CD4-positive, alpha-beta T cell (primary cell): ENCODE measurements at regions of chr1 and their contacts with region 1.

Region 1: DNA sequence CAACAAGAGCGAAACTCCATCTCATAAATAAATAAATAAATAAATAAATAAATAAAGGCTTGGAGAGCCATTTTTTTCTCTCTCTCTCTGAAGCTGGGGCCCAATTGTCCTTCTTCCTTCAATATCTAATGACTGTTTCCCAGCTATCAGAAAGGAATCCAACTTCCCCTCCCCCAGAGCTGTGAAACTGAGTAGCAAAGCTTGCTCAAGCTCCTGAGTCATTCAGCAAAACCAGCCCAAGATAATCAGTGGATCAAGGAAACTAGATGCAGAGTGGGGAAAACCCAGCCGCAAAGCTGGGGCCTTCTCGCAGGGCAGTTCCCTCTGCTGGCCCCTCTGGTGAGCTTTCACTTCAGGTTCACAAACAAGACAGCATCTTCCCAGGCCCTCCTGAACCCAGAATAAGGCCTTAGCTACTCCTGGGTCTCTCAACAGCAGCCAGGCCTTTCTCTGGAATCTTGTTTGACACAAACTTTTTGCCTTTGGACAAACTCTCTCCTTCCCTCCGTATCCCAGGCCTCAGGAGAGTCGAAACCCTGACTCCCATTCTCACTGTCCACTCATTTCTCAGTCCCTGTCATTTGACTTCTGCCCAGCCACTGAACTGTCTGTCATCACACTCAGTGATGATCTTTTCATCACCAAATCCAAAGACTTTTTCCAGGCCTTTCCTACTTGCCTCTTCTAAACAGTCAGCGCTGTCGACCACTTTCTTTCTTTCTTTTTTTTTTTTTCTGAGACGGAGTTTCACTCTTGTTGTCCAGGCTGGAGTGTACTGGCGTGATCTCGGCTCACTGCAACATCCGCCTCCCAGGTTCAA is 18.0 kb upstream of the PTP4A2 start:
- DNase-seq: peak; percentile 39 to 94 (median 63)
- ATAC-seq: peak; percentile 90
- H3K4me3 ChIP-seq: no peak overlapping the region
- H3K4me3 Mint-ChIP-seq: peak overlapping the region; percentile 49
- H3K27ac ChIP-seq: peak overlapping the region; percentile 30 to 82
- H3K27ac Mint-ChIP-seq: peak overlapping the region; percentile 80
- H3K4me1 ChIP-seq: peaks cover 73% of the 10 kb centered on the region
- H3K4me1 Mint-ChIP-seq: peaks cover 71% of the 10 kb centered on the region
- H3K27me3 ChIP-seq: no peaks in the 10 kb centered on the region
- H3K27me3 Mint-ChIP-seq: no peaks in the 10 kb centered on the region
- CTCF ChIP-seq: no peak

Region 2: DNA sequence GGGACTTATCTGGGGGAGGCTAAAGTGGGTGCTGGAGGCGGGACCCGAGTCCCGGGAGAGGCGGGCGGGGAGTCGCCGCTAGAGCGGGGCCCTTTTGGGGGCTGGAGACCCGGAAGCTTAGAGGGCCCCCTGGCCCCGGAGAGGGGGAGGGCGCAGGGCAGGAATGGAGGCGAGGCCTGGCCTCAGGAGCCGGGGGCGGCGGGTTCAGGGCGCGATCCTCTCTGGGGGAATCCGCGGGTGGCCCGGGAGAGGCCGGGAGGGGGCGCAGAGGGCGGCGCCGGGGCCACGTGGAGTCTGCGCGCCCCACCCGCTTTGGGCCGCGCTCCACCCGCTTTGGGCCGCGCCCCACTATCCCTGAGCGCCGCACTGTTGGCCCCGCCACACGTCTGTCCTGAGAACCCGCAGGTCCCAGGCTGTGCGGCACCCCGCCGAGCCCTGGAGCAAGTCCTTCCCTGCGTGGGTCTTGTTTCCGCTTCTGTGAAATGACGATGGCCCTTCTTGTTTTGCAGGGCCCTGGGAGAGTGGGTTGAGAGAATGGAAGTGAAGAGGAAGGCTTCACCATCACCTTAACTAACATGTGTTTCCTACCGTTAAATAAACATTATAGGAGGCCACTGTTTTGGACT is 800.8 kb before region 1 on chr1:
- CTCF ChIA-PET with region 1: no interaction called
- POLR2A ChIA-PET with region 1: no interaction called
- intact Hi-C with region 1: no loop called
- DNase-seq: peak; percentile 14 to 78 (median 32)
- ATAC-seq: peak; percentile 81
- H3K4me3 ChIP-seq: peak overlapping the region; percentile 66
- H3K4me3 Mint-ChIP-seq: peak overlapping the region; percentile 89
- H3K27ac ChIP-seq: no peak overlapping the region
- H3K27ac Mint-ChIP-seq: peak overlapping the region; percentile 40
- H3K4me1 ChIP-seq: peaks cover 14% of the 10 kb centered on the region
- H3K4me1 Mint-ChIP-seq: peaks cover 12% of the 10 kb centered on the region
- H3K27me3 ChIP-seq: no peaks in the 10 kb centered on the region
- H3K27me3 Mint-ChIP-seq: no peaks in the 10 kb centered on the region
- CTCF ChIP-seq: peak; percentile 35

Region 3: DNA sequence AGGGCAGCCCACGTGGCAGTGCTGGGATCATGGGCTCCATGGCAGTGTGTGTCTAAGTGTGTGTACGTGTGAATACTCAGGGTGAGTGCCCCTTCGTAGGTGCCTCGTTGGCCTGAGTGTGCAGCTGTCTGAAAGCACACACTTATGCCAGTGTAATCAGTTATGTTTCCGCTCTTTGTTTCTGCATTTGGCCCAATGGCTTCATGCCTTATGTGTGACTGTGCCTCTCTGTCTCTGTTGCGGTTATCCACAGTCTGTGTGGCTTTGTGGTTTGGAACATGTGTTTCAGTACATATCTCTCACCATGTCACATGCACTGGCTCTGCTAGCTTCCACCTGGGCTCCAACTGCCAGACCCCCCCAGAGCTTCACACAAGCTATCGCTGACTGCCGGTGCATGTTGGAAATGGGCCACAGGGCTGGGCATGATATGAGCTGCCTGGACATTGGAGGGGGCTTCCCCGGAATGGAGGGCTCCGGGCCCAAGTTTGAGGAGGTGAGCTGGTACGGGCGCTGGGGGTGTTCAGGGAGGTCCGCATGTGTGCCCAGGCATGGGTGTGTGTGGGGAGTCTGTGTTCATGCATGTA is 450.1 kb before region 1 on chr1:
- CTCF ChIA-PET with region 1: no interaction called
- POLR2A ChIA-PET with region 1: no interaction called
- intact Hi-C with region 1: no loop called
- DNase-seq: peak in 5 of 14 experiments; percentile 2 to 52 (median 23)
- ATAC-seq: peak; percentile 70
- H3K4me3 ChIP-seq: no peak overlapping the region
- H3K4me3 Mint-ChIP-seq: no peak overlapping the region
- H3K27ac ChIP-seq: no peak overlapping the region
- H3K27ac Mint-ChIP-seq: no peak overlapping the region
- H3K4me1 ChIP-seq: peaks cover 12% of the 10 kb centered on the region
- H3K4me1 Mint-ChIP-seq: peaks cover 46% of the 10 kb centered on the region
- H3K27me3 ChIP-seq: peaks cover 4 to 5% of the 10 kb centered on the region in 2 experiments
- H3K27me3 Mint-ChIP-seq: peaks cover 9% of the 10 kb centered on the region
- CTCF ChIP-seq: no peak

Region 4: GRCh38 chr1:31564134-31564989 is 391.8 kb before region 1 on chr1:
- CTCF ChIA-PET with region 1: no interaction called
- POLR2A ChIA-PET with region 1: no interaction called
- intact Hi-C with region 1: loop called in 1 of 2 experiments (anchors 10 kb)
- DNase-seq: peak in 12 of 14 experiments; percentile 17 to 68 (median 40)
- ATAC-seq: peak; percentile 63
- H3K4me3 ChIP-seq: no peak overlapping the region
- H3K4me3 Mint-ChIP-seq: no peak overlapping the region
- H3K27ac ChIP-seq: no peak overlapping the region
- H3K27ac Mint-ChIP-seq: no peak overlapping the region
- H3K4me1 ChIP-seq: no peaks in the 10 kb centered on the region
- H3K4me1 Mint-ChIP-seq: no peaks in the 10 kb centered on the region
- H3K27me3 ChIP-seq: peaks cover 12 to 20% of the 10 kb centered on the region in 2 experiments
- H3K27me3 Mint-ChIP-seq: peaks cover 13% of the 10 kb centered on the region
- CTCF ChIP-seq: peak; percentile 67

Region 5: DNA sequence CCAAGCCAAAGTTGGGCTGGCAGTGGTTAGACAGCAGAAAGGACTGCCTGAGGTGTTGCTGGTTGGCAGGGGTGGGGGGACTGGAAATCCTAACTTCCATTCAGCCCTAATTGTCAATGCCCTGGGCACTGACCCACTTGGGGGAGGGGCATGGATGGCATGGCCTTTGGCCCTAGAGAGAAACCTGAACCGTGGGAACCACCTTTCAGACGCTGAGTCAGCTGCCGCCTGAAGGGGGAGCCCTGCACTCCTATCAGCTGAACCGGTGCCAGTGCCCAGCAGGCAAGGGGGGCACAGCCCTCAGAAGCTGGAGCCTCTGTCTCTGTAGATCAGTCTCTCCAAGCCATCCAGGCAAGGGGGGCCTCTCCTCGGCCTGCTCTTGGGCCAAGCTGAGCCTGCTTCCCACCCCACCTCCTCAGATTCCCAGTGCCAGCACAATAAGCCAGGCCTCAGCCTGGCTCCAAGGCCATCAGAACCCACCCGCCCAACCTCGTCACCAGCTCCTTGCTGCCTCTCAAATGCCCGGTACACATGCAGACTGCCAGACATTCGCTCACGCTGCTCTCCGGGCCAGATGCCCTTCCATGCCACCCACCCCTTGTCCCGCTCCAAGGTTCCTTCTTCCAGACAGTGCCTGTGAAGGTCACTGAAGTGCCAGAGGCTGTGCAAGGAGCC is 368.3 kb before region 1 on chr1:
- CTCF ChIA-PET with region 1: no interaction called
- POLR2A ChIA-PET with region 1: no interaction called
- intact Hi-C with region 1: no loop called
- DNase-seq: peak in 11 of 14 experiments; percentile 13 to 64 (median 19)
- ATAC-seq: peak; percentile 58
- H3K4me3 ChIP-seq: no peak overlapping the region
- H3K4me3 Mint-ChIP-seq: no peak overlapping the region
- H3K27ac ChIP-seq: no peak overlapping the region
- H3K27ac Mint-ChIP-seq: no peak overlapping the region
- H3K4me1 ChIP-seq: no peaks in the 10 kb centered on the region
- H3K4me1 Mint-ChIP-seq: no peaks in the 10 kb centered on the region
- H3K27me3 ChIP-seq: peaks cover 2 to 6% of the 10 kb centered on the region in 2 experiments
- H3K27me3 Mint-ChIP-seq: peaks cover 41% of the 10 kb centered on the region
- CTCF ChIP-seq: peak; percentile 35

Region 6: DNA sequence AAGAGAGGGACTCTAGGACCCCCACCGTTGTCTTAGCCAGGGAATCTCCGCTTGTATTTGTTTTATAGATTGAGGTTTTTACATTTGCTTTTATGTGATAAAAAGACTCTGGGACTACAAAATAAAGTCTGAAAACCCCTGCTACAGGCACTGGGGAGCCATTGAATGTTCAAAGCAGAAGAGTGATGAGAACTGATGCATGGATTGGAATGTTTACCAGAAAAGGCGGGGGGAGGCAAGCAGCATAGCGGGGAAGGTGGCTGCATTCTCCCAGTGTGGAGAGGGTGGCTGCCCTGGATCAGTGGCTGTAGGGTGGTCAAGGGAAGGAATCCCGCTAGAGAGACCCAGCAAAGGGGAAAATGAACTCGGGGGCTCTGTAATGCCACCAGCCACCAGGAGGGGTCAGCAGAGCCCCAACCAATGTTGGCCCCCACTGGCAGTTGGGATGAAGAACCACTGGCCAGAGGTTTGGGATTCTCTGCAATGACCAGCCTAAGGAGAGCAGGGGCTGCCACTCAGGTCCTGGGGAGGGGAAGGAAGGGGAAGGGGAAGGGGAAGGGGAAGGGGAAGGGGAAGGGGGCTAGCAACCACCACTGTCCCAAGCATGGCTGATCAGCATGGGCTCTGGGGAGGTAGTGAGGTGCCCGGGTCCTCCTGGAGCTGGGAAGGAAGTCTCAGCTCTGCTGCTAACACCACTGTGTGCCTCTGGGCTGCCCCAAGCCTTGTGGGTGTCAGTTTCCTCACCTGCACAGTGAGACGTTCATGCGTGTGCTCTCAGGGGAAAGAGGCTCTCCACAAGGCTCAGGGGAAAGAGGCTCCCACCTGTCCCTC is 292.3 kb before region 1 on chr1:
- CTCF ChIA-PET with region 1: no interaction called
- POLR2A ChIA-PET with region 1: no interaction called
- intact Hi-C with region 1: loop called in 1 of 2 experiments (anchors 5 kb)
- DNase-seq: peak in 13 of 14 experiments; percentile 23 to 72 (median 54)
- ATAC-seq: peak; percentile 54
- H3K4me3 ChIP-seq: no peak overlapping the region
- H3K4me3 Mint-ChIP-seq: no peak overlapping the region
- H3K27ac ChIP-seq: no peak overlapping the region
- H3K27ac Mint-ChIP-seq: no peak overlapping the region
- H3K4me1 ChIP-seq: no peaks in the 10 kb centered on the region
- H3K4me1 Mint-ChIP-seq: no peaks in the 10 kb centered on the region
- H3K27me3 ChIP-seq: no peaks in the 10 kb centered on the region
- H3K27me3 Mint-ChIP-seq: no peaks in the 10 kb centered on the region
- CTCF ChIP-seq: peak; percentile 80

Region 7: DNA sequence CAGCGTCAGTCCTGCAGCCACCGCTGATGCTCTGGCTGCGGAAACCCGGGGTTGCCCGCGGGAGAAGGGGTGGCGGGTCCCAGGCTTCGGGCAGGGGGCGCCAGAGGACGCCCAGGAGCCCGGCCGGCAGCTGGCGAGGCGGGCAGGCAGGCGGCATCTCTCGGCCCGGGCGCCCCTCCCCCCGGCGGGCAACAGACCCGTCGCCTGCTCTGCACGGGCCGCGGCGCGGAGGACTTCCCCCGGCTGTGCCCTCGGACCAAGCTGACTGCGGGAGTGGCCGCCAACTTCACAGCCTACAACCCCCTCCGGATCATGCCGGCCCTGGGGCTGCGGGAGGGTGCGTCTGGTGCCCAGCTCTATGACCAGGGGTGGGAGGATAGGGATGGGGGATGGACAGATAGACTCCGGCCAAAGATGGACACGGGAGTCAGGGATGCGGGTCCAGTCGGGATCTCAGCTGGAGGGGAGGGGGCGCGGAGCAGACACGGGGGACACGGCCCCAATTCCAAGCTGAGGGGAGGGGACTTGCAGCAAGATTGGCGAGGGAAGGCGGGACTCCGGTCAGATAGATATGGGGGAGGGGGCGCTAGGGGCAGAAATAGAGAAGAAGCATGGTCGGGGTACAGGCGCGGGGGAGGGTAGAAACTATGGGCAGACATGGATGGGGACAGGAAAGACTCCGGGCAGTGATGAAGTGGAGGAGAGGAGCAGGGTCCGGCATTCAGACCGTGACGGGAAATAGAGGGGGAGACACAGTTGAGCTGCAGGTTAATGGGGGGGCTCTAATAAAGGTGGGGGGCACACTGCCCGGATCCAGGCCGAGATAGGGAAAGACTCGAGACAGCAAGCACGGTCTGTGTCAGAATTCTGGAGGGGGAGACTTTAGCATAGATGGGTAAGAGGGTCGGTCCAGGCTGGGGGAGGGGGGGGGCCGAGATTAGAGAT is 193.1 kb before region 1 on chr1:
- CTCF ChIA-PET with region 1: no interaction called
- POLR2A ChIA-PET with region 1: interaction called, 3 read pairs
- intact Hi-C with region 1: loop called in 1 of 2 experiments (anchors 5 kb)
- DNase-seq: peak; percentile 48 to 88 (median 62)
- ATAC-seq: peak; percentile 51
- H3K4me3 ChIP-seq: peak overlapping the region; percentile 42
- H3K4me3 Mint-ChIP-seq: peak overlapping the region; percentile 86
- H3K27ac ChIP-seq: no peak overlapping the region
- H3K27ac Mint-ChIP-seq: no peak overlapping the region
- H3K4me1 ChIP-seq: peaks cover 46% of the 10 kb centered on the region
- H3K4me1 Mint-ChIP-seq: peaks cover 26% of the 10 kb centered on the region
- H3K27me3 ChIP-seq: peaks cover 11% of the 10 kb centered on the region in 2 experiments
- H3K27me3 Mint-ChIP-seq: peaks cover 15% of the 10 kb centered on the region
- CTCF ChIP-seq: peak; percentile 61

Region 8: DNA sequence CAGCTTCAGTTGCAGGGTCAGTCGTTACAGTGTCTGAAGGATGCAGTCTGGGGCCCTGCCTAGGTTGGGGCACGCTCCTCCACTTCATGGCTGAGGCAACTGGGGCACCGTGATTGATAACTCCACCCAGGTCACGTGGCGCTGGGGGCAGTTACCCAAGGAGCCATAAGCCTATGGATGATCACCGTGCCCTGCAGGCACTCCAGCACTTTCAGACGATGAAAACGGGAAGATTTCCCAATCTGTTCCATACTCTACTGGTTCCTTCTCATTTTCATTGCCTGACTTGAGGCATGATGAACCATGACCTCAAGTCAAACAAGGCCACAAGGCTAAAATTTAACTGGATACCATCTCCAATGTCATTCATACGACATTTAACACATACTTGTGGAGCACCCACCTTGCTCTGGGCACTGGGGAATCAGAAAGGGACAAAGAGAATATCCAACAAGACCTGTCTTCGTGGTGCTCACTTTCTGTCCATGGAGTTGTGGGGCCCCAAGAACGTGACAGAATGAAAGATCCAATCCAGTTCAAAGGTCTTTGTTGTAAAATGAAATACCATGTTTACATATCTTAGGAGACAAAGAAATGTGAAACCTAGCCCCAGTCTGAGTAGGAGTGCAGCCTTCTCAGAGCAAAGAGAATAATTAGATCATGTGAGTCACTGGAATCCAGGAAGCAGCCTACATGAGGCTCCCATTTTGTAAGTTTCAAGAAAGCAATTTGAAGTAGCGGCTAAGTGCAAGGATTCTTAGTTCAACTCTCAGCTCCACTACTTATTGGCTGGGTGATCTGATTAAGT is 100.9 kb before region 1 on chr1:
- CTCF ChIA-PET with region 1: no interaction called
- POLR2A ChIA-PET with region 1: no interaction called
- intact Hi-C with region 1: no loop called
- DNase-seq: no peak
- ATAC-seq: no peak
- H3K4me3 ChIP-seq: no peak overlapping the region
- H3K4me3 Mint-ChIP-seq: no peak overlapping the region
- H3K27ac ChIP-seq: no peak overlapping the region
- H3K27ac Mint-ChIP-seq: no peak overlapping the region
- H3K4me1 ChIP-seq: peaks cover 13% of the 10 kb centered on the region
- H3K4me1 Mint-ChIP-seq: peaks cover 21% of the 10 kb centered on the region
- H3K27me3 ChIP-seq: no peaks in the 10 kb centered on the region
- H3K27me3 Mint-ChIP-seq: no peaks in the 10 kb centered on the region
- CTCF ChIP-seq: no peak

Region 9: GRCh38 chr1:31923901-31924535 is 32.1 kb before region 1 on chr1:
- CTCF ChIA-PET with region 1: interaction called, 5 read pairs
- POLR2A ChIA-PET with region 1: interaction called, 3 read pairs
- intact Hi-C with region 1: loop called (anchors 5 kb)
- DNase-seq: peak in 2 of 14 experiments; percentile 38 to 56
- ATAC-seq: peak; percentile 56
- H3K4me3 ChIP-seq: no peak overlapping the region
- H3K4me3 Mint-ChIP-seq: peak overlapping the region; percentile 76
- H3K27ac ChIP-seq: no peak overlapping the region
- H3K27ac Mint-ChIP-seq: peak overlapping the region; percentile 90
- H3K4me1 ChIP-seq: peaks cover 59% of the 10 kb centered on the region
- H3K4me1 Mint-ChIP-seq: peaks cover 81% of the 10 kb centered on the region
- H3K27me3 ChIP-seq: no peaks in the 10 kb centered on the region
- H3K27me3 Mint-ChIP-seq: no peaks in the 10 kb centered on the region
- CTCF ChIP-seq: no peak

Region 10: GRCh38 chr1:31944205-31945089 is 11.7 kb before region 1 on chr1:
- CTCF ChIA-PET with region 1: interaction called, 43 read pairs
- POLR2A ChIA-PET with region 1: interaction called, 413 read pairs
- intact Hi-C with region 1: loop called (anchors 1 to 2 kb)
- DNase-seq: peak; percentile 60 to 96 (median 85)
- ATAC-seq: peak; percentile 64
- H3K4me3 ChIP-seq: peak overlapping the region; percentile 58
- H3K4me3 Mint-ChIP-seq: peak overlapping the region; percentile 89
- H3K27ac ChIP-seq: peak overlapping the region; percentile 53 to 83
- H3K27ac Mint-ChIP-seq: peak overlapping the region; percentile 95
- H3K4me1 ChIP-seq: peaks cover 67% of the 10 kb centered on the region
- H3K4me1 Mint-ChIP-seq: peaks cover 54% of the 10 kb centered on the region
- H3K27me3 ChIP-seq: no peaks in the 10 kb centered on the region
- H3K27me3 Mint-ChIP-seq: no peaks in the 10 kb centered on the region
- CTCF ChIP-seq: no peak

Region 11: GRCh38 chr1:32063261-32063681 is 107.1 kb after region 1 on chr1:
- CTCF ChIA-PET with region 1: no interaction called
- POLR2A ChIA-PET with region 1: no interaction called
- intact Hi-C with region 1: loop called in 1 of 2 experiments (anchors 5 kb)
- DNase-seq: peak in 3 of 14 experiments; percentile 53 to 60 (median 56)
- ATAC-seq: peak; percentile 73
- H3K4me3 ChIP-seq: no peak overlapping the region
- H3K4me3 Mint-ChIP-seq: no peak overlapping the region
- H3K27ac ChIP-seq: no peak overlapping the region
- H3K27ac Mint-ChIP-seq: peak overlapping the region; percentile 46
- H3K4me1 ChIP-seq: peaks cover 14% of the 10 kb centered on the region
- H3K4me1 Mint-ChIP-seq: peaks cover 19% of the 10 kb centered on the region
- H3K27me3 ChIP-seq: no peaks in the 10 kb centered on the region
- H3K27me3 Mint-ChIP-seq: no peaks in the 10 kb centered on the region
- CTCF ChIP-seq: peak; percentile 72